ENCODE measurements at regions of chr4 and their contacts with region 1.

Region 1: DNA sequence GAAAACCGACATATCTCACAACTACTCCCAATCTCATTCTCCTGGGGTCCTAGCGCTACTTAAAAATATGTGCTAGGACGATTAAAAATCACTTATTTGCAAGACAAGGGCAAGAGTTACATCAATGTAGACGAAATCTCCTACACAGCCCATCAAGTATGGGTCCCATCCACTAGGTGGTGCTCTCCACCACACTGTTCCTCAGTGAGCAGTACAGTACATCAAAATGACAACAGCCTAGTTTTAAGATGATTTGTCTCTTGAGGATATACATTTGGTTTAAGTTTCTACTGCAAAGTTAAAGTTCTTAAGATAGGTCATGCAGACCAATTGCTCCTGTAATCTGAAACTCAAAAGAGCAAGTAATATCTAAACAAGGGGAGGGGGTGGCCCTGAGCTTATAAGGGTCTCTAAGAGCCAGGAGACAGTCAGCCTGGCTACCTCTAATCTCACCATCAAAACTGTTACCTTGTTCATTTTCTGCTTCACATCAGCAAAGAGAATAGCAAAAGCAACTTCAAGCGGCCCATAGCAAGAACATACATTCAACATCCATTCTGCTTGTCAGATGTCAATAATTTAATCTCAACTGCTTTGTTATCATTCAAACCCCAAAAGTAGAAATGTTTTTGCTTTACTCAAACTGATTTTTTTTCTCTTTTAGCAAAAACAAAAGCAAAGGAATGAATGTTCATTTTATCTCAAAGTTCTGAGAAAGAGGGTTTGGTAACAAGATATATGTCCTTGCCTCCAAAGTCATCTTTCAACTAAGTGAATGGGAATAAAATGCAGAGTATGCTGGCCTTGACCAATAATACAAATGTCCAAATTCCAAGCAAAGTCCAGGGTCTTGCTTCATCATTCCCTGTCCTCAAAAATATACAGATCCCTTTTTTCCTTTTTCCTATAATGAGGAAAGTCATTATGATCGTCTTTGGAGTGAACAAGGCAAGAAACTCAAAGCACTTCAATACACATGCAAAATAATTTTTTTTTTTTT is 53.1 kb downstream of the STX18 start:
- DNase-seq: peak; percentile 85
- H3K4me3 ChIP-seq: no peak overlapping the region
- H3K27ac ChIP-seq: no peak overlapping the region
- H3K4me1 ChIP-seq: peaks cover 22% of the 10 kb centered on the region
- H3K27me3 ChIP-seq: no peaks in the 10 kb centered on the region
- CTCF ChIP-seq: peak; percentile 91

Region 2: DNA sequence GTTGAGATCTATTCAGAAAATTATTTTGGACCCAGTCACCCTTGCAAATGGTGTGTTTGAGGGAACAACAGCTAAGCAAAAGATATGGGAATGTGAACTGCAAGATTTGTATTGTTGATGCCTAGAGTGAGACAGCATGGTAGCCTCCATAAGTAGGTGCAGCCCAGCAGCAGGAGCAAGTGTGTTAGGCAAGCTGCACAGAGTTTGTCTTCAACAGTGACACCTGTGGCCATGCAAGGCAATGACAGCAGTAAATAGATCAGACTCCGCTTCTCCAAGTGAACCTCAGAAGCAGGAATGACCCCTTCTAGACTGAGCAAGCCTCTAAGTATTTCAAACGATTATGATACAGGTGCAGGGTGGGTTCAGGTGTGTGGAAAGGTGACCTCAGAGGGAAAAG is 237.3 kb after region 1 on chr4:
- CTCF ChIA-PET with region 1: no interaction called
- POLR2A ChIA-PET with region 1: no interaction called
- intact Hi-C with region 1: no loop called
- DNase-seq: no peak
- H3K4me3 ChIP-seq: no peak overlapping the region
- H3K27ac ChIP-seq: no peak overlapping the region
- H3K4me1 ChIP-seq: no peaks in the 10 kb centered on the region
- H3K27me3 ChIP-seq: no peaks in the 10 kb centered on the region
- CTCF ChIP-seq: 0 out of 2 replicates have a peak, but pooled peaks have one; percentile 37

Region 3: GRCh38 chr4:4880492-4880891 is 391.8 kb after region 1 on chr4:
- CTCF ChIA-PET with region 1: no interaction called
- POLR2A ChIA-PET with region 1: no interaction called
- intact Hi-C with region 1: loop called (anchors 5 kb)
- DNase-seq: no peak
- H3K4me3 ChIP-seq: no peak overlapping the region
- H3K27ac ChIP-seq: no peak overlapping the region
- H3K4me1 ChIP-seq: no peaks in the 10 kb centered on the region
- H3K27me3 ChIP-seq: no peaks in the 10 kb centered on the region
- CTCF ChIP-seq: peak; percentile 51; the same call in 1 of the 2 replicates

Region 4: DNA sequence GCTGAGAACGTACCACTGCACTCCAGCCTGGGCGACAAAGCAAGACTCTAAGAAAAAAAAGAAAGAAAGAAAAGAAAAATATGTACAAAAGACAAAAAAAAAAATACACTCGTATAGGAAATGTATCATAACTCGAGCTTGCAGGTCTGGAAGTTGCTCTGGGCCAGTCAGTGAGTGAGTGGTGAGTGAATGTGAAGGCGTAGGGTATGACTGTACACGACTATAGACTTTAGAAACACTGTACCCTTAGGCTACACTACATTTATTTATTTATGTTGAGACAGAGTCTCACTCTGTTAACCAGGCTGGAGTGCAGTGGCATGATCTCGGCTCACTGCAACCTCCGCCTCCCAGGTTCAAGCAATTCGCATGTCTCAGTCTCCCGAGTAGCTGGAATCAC is 1190.3 kb after region 1 on chr4:
- CTCF ChIA-PET with region 1: no interaction called
- POLR2A ChIA-PET with region 1: no interaction called
- intact Hi-C with region 1: no loop called
- DNase-seq: no peak
- H3K4me3 ChIP-seq: no peak overlapping the region
- H3K27ac ChIP-seq: no peak overlapping the region
- H3K4me1 ChIP-seq: no peaks in the 10 kb centered on the region
- H3K27me3 ChIP-seq: no peaks in the 10 kb centered on the region
- CTCF ChIP-seq: no peak

Region 5: DNA sequence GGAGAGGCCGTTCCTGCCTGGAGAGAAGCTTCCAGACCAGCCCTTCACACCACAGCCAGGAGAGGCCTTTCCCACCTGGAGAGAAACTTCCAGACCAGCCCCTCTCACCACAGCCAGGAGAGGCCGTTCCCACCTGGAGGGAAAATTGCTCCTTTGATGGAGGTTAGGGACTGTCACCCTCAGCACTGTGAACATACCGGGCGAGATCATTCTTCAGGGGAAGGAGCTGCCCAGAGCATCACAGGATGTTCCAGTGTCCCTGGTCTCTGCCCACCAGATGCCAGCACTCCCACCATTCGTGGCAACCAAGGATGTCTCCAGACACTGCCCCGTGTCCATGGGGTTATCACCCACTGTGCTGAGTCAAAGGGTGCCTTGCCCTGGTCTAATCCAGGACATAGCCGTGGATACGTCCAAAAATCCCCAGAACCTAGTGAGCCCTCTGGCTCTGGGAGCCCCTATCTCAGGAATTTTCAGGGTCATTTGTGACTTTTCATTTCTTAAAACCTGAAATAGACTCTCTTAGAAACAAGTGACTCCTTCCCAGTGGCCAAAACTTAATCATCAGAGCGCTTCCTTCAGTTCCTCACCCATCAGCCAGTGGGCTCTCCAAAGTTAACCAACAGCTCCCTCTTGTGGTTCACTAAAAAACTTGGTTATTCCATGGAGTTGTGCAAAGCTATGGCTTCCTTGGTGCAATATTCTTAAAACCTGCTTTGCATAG is 1324.0 kb after region 1 on chr4:
- CTCF ChIA-PET with region 1: no interaction called
- POLR2A ChIA-PET with region 1: no interaction called
- intact Hi-C with region 1: loop called (anchors 10 kb)
- DNase-seq: peak; percentile 85
- H3K4me3 ChIP-seq: no peak overlapping the region
- H3K27ac ChIP-seq: no peak overlapping the region
- H3K4me1 ChIP-seq: peaks cover 12% of the 10 kb centered on the region
- H3K27me3 ChIP-seq: no peaks in the 10 kb centered on the region
- CTCF ChIP-seq: peak; percentile 72

Measured in A673 (cell line).